Activated T-helper 1 cell treated with anti-CD3 and anti-CD28 coated beads, Interleukin-12 subunit alpha, Interleukin-12 subunit beta, Interleukin-2, Interleukin-4 antibody, amounts not matched to agents 30 ng/mL and 10 ng/mL and 1 ng/mL, durations not matched to agents 14 hours and 24 hours and 36 hours (primary cell): ENCODE measurements at regions of chr22 and their contacts with region 1.

Region 1: DNA sequence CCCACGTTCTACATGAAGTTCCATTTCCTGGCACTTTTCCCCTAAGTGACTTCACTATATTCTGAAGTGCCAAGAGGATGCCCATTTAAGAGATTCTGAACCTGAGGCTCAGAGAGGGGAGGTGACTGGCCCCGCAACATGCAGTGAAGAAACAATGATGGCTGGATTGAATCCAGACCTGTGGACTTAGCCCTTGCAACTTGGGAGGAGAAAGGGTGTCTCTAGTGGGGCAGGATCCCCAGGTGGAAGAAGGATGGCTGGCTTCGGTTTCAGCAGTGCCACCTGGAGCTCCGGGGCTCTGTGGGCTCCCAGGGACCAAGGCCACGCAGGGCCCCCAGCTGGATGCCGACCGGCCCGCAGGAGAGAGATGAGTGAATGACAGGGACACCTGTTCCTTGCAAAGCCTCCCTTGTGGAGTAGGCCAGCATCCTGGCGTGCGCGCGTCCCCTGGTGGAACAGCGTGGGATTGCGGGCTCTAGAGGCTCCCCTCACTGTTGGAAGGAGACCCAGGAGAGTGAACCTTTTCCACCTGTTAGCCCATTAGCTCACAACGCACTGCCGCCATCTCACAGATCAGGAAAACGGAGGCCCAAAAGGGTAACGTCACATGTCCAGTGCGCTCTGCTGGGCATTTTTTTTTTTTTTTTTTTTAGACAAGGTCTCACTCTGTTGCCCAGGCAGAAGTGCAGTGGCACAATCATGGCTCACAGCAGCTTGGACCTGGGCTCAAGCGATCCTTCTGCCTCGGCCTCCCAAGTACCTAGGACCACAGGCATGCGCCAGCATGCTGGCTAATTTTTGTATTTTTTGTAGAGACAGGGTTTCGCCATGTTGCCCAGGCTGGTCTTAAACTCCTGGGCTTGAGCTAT is 104.7 kb downstream of the KIAA1671 start:
- DNase-seq: peak; percentile 65
- H3K4me3 Mint-ChIP-seq: no peak overlapping the region
- H3K27ac Mint-ChIP-seq: peak overlapping the region; percentile 44
- H3K4me1 Mint-ChIP-seq: peaks cover 55% of the 10 kb centered on the region
- H3K27me3 Mint-ChIP-seq: no peaks in the 10 kb centered on the region

Region 2: GRCh38 chr22:24555157-24556039 is 501.8 kb before region 1 on chr22 and contains the start of gene SNRPD3:
- intact Hi-C with region 1: loop called (anchors 5 kb)
- DNase-seq: peak; percentile 97
- H3K4me3 Mint-ChIP-seq: peak within 1 kb of the TSS; percentile 98
- H3K27ac Mint-ChIP-seq: peak within 1 kb of the TSS; percentile 97
- H3K4me1 Mint-ChIP-seq: peaks cover 64% of the 10 kb centered on the region
- H3K27me3 Mint-ChIP-seq: no peaks in the 10 kb centered on the region
- total RNA-seq, gene SNRPD3: 155 and 158 TPM in 2 replicates

Region 3: GRCh38 chr22:24938741-24939341 is 118.4 kb before region 1 on chr22:
- intact Hi-C with region 1: loop called (anchors 1 kb)
- DNase-seq: peak; percentile 31
- H3K4me3 Mint-ChIP-seq: no peak overlapping the region
- H3K27ac Mint-ChIP-seq: no peak overlapping the region
- H3K4me1 Mint-ChIP-seq: no peaks in the 10 kb centered on the region
- H3K27me3 Mint-ChIP-seq: peaks cover 2% of the 10 kb centered on the region

Region 4: DNA sequence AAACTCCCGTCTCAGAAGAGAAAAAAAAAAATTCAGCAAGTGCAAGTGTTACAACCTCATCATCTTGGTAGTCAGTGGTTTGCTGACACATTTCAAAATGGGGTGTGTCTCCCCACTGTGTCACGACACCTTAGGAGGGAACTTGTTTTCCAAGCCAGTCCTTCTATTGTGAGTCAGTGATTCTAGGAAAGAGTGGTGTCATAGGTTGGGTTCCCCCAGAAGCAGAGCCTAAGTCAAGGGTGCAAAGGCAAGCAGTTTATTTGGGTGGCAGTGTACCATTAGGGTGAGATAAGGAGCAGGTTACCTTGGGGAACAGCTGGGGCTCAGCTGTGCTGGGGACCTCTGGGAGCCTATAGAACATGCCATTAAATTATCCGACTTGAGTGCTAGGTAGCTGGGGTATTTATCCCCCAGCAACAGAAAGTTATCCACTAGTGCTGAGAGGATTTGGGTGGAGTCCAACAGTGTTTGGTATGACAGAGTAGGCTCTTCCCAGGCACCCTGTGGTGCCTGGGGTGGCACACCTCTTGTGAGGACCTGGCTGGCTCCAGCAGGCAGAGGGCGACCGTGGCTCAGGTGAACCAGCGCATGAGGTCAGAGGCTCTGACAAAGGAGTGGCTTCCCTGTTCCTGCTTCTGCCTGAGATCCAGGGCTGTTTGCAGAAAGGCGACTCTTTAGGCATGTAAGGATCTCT is 63.0 kb before region 1 on chr22:
- intact Hi-C with region 1: loop called (anchors 1 kb)
- DNase-seq: peak; percentile 71
- H3K4me3 Mint-ChIP-seq: peak overlapping the region; percentile 19
- H3K27ac Mint-ChIP-seq: peak overlapping the region; percentile 81
- H3K4me1 Mint-ChIP-seq: peaks cover 59% of the 10 kb centered on the region
- H3K27me3 Mint-ChIP-seq: peaks cover 7% of the 10 kb centered on the region

Region 5: DNA sequence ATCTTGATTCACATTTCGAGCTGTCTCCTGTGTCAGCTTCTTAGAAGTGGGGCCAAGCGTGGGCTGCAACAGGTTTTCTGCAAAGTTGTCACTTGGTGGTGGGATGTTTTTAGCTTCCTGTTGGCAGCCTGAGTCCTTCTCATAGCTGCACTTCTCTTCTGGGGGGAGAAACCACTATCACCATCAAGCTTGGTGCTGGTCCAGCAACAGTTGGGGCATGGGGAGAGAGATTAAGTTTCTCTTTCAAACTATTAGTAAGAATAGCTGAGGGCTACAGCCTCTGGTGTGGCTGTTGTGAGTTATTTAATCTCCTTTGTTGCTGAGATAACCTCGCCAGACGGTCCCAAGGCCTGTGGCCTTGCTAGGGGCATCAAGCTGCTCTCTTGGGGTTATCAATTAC is 19.1 kb after region 1 on chr22:
- intact Hi-C with region 1: loop called (anchors 1 kb)
- DNase-seq: peak; percentile 29
- H3K4me3 Mint-ChIP-seq: peak overlapping the region; percentile 61
- H3K27ac Mint-ChIP-seq: peak overlapping the region; percentile 88
- H3K4me1 Mint-ChIP-seq: peaks cover 90% of the 10 kb centered on the region
- H3K27me3 Mint-ChIP-seq: no peaks in the 10 kb centered on the region

Region 6: DNA sequence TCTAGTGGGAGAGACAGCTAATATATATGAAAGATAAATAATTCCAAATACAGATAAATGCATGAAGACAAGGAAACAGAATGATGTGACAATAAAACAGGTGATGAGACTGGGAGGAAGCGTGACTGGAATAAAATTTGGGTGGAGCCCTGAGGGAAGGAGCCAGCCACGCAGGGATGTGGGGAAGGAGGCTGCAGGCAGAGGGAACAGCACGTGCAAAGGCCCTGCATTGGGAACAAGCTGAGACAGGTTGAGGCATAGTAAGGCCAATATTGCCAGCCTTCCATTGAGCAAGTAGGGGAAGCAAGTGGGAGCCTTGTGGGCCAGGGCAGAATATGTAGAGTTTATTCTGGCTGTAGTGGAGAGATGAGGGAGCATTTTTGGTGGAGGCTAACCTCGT is 34.9 kb after region 1 on chr22:
- intact Hi-C with region 1: no loop called
- DNase-seq: no peak
- H3K4me3 Mint-ChIP-seq: no peak overlapping the region
- H3K27ac Mint-ChIP-seq: peak overlapping the region; percentile 18
- H3K4me1 Mint-ChIP-seq: peaks cover 22% of the 10 kb centered on the region
- H3K27me3 Mint-ChIP-seq: no peaks in the 10 kb centered on the region

Region 7: DNA sequence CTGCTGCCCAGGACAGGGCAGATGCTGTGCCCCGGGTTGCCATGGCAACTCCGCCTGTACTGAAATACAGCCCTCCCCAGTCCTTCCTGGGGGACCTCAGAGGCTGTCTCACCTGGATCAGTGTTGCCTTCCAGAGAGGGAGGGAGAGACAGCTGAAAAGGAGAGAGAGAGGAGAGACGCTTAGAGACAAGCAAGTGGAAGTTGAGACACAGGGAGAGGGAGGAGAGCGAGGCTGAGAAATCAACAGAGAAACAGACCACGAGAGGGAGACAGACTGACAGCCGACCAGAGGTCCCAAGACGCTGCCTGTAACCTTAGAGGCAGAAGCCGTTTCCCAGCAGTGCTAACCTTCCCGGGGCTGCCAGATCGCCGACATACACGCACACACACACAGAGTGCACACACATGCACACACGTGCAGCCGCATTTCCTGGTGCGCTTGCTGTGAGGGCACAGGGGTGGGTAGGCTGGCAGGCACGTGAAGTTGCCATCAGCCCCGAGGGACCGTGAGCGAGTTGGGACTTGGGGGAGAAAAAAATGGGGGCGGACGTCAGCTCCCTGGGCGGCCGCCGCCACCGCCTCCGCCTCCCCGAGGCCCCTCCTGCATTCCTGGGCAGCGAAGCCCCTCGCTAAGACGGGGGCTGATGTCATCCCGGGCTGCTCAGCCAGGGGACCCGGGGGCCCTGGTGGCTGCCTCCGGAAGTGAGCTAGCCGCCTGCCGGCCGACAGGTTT is 53.8 kb after region 1 on chr22:
- intact Hi-C with region 1: loop called (anchors 1 kb)
- DNase-seq: peak; percentile 30
- H3K4me3 Mint-ChIP-seq: peak overlapping the region; percentile 82
- H3K27ac Mint-ChIP-seq: peak overlapping the region; percentile 82
- H3K4me1 Mint-ChIP-seq: peaks cover 18% of the 10 kb centered on the region
- H3K27me3 Mint-ChIP-seq: peaks cover 2% of the 10 kb centered on the region

Region 8: GRCh38 chr22:25488244-25489020 is 431.2 kb after region 1 on chr22:
- intact Hi-C with region 1: loop called (anchors 2 kb)
- DNase-seq: no peak
- H3K4me3 Mint-ChIP-seq: peak overlapping the region; percentile 28
- H3K27ac Mint-ChIP-seq: peak overlapping the region; percentile 90
- H3K4me1 Mint-ChIP-seq: peaks cover 62% of the 10 kb centered on the region
- H3K27me3 Mint-ChIP-seq: peaks cover 4% of the 10 kb centered on the region

Region 9: GRCh38 chr22:25514436-25515180 is 457.4 kb after region 1 on chr22:
- intact Hi-C with region 1: no loop called
- DNase-seq: no peak
- H3K4me3 Mint-ChIP-seq: no peak overlapping the region
- H3K27ac Mint-ChIP-seq: no peak overlapping the region
- H3K4me1 Mint-ChIP-seq: no peaks in the 10 kb centered on the region
- H3K27me3 Mint-ChIP-seq: no peaks in the 10 kb centered on the region